Lower leg skin (tissue), 4 donors: ENCODE measurements at regions of chr17 and their contacts with region 1.

Region 1: GRCh38 chr17:72725433-72726068 is 366.9 kb downstream of the SLC39A11 start:
- DNase-seq: peak in 1 of 2 donors; percentile 30
- H3K4me3 ChIP-seq: no peak overlapping the region
- CTCF ChIP-seq: peak in 1 of 3 donors; percentile 71
- POLR2A ChIP-seq: no peak

Region 2: DNA sequence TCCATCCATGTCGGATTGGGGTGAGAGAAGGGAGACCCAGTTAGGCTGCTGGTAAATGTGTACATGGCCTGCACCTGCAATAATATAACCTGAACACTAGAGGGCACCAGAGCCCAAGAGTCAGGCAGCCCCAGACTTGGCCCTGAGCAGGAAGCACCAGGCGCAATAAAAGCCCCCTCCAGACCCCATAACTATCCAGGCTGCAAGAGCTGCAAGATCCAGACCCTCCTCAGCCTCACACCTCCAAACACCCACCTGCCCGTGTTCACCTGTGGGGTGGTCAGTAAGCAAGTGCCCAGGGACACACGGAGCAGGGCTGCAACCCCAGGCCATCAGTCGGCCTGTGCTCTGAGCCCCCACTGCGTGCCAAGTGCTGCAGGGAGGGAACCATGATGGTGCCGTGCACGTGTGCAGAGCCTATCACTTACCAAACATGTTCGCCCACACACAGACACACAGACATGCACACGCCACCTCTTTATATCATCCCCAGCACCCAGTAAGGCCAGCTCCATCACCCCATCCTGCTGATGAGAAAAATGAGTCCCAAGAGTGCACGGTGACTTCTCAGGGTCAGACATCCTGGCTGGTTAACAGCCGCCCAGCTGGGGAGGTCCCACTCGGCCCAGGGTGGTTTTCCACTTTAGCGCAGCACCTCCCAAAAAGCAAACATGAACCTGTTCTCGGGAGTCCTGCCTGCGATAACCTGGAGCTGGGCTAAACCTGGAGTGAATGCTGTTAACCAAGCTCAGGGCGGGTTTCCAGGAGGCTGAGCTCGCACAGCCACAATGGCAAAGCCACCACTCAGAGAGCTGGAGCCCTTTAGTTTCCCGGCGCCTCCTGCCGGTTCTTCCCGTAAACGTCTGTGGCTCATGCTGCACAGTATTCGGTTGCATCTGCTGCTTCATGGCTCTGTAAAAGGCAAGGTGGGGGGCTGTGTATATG is 165.0 kb before region 1 on chr17:
- intact Hi-C with region 1: loop called (anchors 10 kb)
- DNase-seq: no peak
- H3K4me3 ChIP-seq: no peak overlapping the region
- CTCF ChIP-seq: no peak
- POLR2A ChIP-seq: no peak

Region 3: DNA sequence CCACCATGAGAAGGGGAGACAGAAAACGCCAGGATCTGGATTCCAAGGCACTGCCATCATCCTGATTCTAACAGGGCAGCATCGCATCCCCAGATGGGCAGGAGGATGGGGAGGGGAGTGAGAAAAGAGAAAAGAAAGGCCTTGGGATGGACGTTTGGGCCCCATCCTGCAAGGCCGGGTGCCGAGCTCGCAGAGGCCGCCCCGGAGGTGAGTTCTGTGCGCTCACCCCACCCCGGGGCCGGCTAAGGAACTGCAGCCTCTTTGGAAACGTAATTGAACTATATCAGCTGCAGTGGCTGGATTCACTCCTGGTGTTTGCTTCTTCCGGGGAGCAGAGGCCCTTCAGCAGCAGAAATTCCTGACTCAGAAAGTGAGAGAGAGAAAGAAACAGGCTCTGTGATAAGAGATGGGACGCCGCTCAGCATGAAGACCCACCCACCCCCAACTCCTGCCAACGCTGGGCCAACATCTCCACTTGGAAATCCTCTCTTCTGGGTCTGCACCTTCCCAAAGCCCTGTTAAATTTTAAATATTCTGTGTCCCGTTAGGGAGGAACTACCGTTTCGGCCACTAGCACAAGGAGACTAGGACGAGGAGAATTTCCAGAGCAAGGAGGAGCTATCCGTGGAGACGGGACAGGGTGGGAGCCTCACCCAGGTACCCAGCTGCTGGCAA is 430.8 kb after region 1 on chr17:
- intact Hi-C with region 1: loop called (anchors 10 kb)
- DNase-seq: peak; percentile 50 to 93
- H3K4me3 ChIP-seq: no peak overlapping the region
- CTCF ChIP-seq: peak in 1 of 3 donors; percentile 82
- POLR2A ChIP-seq: no peak

Region 4: GRCh38 chr17:73371285-73371684 is 645.7 kb after region 1 on chr17:
- intact Hi-C with region 1: loop called (anchors 10 kb)
- DNase-seq: no peak
- H3K4me3 ChIP-seq: no peak overlapping the region
- CTCF ChIP-seq: no peak
- POLR2A ChIP-seq: no peak

Region 5: GRCh38 chr17:74408262-74408661 is 1682.7 kb after region 1 on chr17:
- intact Hi-C with region 1: no loop called
- DNase-seq: no peak
- H3K4me3 ChIP-seq: no peak overlapping the region
- CTCF ChIP-seq: no peak
- POLR2A ChIP-seq: no peak